ENCODE measurements at regions of chr14 and their contacts with region 1.

Region 1: GRCh38 chr14:87944987-87945604 is 47.9 kb downstream of the GALC start:
- DNase-seq: no peak
- ATAC-seq: peak; percentile 62
- H3K4me3 Mint-ChIP-seq: no peak overlapping the region
- H3K27ac Mint-ChIP-seq: no peak overlapping the region
- H3K4me1 Mint-ChIP-seq: peaks cover 2% of the 10 kb centered on the region
- H3K27me3 Mint-ChIP-seq: no peaks in the 10 kb centered on the region
- CTCF ChIP-seq: peak; percentile 83

Region 2: GRCh38 chr14:87934185-87934584 is 10.9 kb before region 1 on chr14:
- CTCF ChIA-PET with region 1: interaction called, 32 read pairs
- POLR2A ChIA-PET with region 1: no interaction called
- intact Hi-C with region 1: no loop called
- DNase-seq: no peak
- ATAC-seq: no peak
- H3K4me3 Mint-ChIP-seq: no peak overlapping the region
- H3K27ac Mint-ChIP-seq: no peak overlapping the region
- H3K4me1 Mint-ChIP-seq: peaks cover 3% of the 10 kb centered on the region
- H3K27me3 Mint-ChIP-seq: no peaks in the 10 kb centered on the region
- CTCF ChIP-seq: no peak

Region 3: DNA sequence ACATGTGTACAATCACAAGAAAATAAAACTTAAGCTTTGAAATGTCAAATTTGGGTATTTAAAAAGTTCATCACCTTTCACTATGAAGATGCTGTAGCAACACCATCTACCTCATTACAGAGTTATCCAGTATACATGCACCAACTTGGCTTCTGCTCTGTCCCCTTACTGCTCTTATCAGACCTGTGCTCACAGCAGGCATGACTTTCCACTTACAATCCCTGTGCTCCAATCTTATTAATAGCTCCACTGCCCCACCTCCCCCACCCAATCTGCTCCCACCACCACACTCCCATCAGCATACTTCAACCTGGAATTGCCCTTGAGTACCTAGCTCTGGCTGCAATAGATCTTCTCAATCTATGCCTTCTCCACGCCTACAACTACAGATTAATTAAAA is 34.6 kb after region 1 on chr14:
- CTCF ChIA-PET with region 1: interaction called, 10 read pairs
- POLR2A ChIA-PET with region 1: no interaction called
- intact Hi-C with region 1: no loop called
- DNase-seq: no peak
- ATAC-seq: no peak
- H3K4me3 Mint-ChIP-seq: no peak overlapping the region
- H3K27ac Mint-ChIP-seq: no peak overlapping the region
- H3K4me1 Mint-ChIP-seq: peaks cover 9% of the 10 kb centered on the region
- H3K27me3 Mint-ChIP-seq: no peaks in the 10 kb centered on the region
- CTCF ChIP-seq: no peak

Region 4: DNA sequence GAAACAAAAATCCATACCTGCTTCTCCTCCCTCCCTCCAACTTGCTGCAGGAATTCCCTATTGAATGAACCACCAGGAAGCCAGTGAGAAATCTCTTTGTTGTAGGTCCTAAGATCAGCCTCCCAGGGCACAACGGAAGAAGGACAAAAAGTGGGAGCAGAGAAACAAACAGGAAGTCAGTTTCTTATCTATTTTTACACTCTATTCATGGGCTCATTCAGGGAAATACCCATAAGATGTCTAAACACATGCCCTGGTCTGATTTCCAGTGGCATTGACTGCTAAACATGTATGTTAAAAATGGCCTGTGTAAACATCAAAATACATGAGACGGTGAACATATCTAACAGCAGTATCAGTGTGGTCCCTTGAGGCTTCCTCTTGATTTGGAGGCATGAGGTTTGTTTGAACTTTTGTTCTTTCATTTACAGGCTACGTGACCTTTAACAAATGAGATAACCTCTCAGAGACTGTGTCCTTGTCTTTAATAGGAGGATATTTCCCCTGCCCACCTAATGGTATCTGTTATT is 78.6 kb after region 1 on chr14:
- CTCF ChIA-PET with region 1: interaction called, 14 read pairs
- POLR2A ChIA-PET with region 1: no interaction called
- intact Hi-C with region 1: no loop called
- DNase-seq: no peak
- ATAC-seq: peak; percentile 75
- H3K4me3 Mint-ChIP-seq: no peak overlapping the region
- H3K27ac Mint-ChIP-seq: peak overlapping the region; percentile 85
- H3K4me1 Mint-ChIP-seq: peaks cover 67% of the 10 kb centered on the region
- H3K27me3 Mint-ChIP-seq: no peaks in the 10 kb centered on the region
- CTCF ChIP-seq: no peak